Lower leg skin (tissue), 4 donors: ENCODE measurements at regions of chr12 and their contacts with region 1.

Region 1: DNA sequence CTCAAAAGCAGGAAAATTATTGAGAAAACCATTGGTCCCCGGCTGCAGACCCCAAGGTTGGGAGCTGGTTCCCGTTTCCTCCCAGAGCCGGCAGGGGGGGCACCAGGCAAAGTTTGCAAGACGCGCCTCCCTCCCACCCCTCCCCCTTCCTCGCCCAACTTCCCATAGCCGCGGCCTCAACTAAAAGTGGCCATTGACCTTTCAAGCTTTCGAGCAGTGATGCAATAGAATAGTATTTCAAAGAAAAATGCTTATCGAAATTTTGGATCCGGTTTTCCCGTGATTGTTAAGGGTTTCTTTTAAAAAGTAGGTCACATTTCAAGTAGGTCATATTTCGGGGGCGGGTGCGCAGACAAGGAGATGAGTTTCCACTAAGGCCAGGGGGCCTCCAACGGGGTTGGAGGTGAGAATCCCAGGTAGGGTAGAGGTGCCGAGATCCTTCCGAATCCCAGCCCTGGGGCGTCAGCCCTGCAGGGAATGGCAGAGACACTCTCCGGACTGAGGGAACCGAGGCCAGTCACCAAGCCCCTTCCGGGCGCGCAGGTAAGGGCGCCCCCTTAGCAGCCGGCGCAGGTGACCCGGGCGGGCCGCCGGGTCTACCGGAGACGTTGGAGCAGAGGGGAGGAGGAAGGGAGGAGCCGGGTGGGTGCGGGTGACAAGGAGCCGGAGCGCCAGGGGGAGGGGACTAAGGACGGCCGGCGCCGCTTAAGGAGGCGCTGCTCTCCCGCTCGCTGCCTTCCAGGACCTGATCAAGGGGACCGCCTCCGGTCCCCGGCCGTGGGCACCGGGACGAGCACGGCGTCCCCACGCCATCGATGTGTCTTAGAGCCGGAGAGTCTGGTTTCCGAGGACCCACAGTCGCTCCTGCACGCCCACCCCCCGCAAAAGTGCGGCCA is 2.6 kb upstream of the SOCS2 start:
- DNase-seq: peak; percentile 82 to 97
- H3K4me3 ChIP-seq: peak overlapping the region; percentile 66
- CTCF ChIP-seq: no peak
- POLR2A ChIP-seq: no peak

Region 2: GRCh38 chr12:93223440-93224426 is 346.2 kb before region 1 on chr12:
- intact Hi-C with region 1: no loop called
- DNase-seq: no peak
- H3K4me3 ChIP-seq: no peak overlapping the region
- CTCF ChIP-seq: no peak
- POLR2A ChIP-seq: no peak

Region 3: DNA sequence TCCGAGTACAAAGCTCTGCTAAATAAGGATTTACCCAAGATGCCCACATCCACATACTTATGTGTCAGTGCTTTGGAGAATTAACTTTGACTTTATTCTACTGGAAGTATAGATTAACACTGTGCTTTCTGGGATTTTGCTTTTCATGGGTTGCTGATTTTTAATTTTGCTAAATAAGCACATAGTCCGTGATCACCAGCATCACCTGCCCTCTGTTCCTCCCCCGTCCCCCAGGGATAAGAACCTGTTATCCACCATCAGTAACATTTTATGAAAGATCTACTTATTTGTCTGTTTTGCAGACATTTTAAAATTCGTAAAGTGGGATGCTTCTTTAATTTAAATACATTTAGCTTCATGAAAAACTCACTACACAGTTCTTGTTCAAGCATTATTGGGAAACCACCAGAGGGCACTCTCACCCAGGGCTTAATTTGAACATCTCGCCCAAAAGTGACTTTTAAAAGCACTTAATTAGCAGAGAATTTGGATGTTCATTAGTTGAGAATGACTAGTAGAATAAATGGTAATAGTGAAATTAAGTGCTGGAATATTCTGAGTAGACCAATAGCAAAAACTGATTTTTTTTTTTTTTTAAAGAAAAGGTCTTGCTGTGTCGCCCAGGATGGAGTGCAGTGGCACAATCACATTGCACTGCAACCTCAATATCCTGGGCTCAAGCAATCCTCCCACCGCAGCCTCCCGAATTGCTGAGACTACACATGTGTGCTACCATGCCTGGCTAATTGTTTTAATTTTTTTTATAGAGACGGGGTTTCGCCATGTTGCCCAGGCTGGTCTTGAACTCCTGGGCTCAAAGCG is 66.9 kb before region 1 on chr12:
- intact Hi-C with region 1: no loop called
- DNase-seq: peak in 1 of 2 donors; percentile 28
- H3K4me3 ChIP-seq: no peak overlapping the region
- CTCF ChIP-seq: peak in 1 of 3 donors; percentile 34
- POLR2A ChIP-seq: no peak

Region 4: DNA sequence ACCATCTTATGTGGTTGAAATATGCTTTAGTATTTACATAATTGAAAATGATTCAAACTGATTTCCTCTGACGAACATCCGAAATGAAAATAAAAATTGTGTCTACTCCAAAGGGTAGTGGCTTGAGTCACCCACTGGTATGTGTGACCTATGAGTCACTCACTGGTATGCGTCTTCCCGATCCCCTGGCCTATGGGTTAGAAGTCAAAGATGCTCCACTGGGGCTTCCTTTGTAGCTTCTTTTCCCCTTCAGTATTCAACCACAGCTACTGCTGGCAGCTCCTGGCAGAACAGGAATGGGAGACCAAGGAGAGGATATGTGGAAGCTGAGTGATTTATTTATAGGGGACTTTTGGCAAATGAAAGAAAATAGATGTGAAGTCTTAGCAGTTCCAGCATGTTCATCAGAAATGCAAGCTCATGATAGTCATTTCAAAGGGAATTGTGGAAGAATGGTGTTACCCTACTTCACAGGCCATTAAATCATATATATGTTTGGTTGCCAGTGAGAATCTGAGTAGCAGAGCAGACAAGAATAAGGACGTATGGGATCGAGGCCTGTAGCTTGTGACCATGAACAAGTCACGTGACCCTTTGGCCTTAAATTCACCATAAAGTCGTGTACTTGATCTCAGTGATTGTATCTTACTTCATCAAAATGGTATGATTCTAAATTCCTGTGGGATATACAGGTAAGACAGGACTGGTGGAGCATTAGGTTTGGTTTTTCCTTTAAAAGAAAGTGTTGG is 215.5 kb after region 1 on chr12:
- intact Hi-C with region 1: no loop called
- DNase-seq: peak in 1 of 2 donors; percentile 62
- H3K4me3 ChIP-seq: no peak overlapping the region
- CTCF ChIP-seq: no peak
- POLR2A ChIP-seq: no peak

Region 5: GRCh38 chr12:94101738-94102660 is 532.1 kb after region 1 on chr12:
- intact Hi-C with region 1: loop called (anchors 5 kb)
- DNase-seq: peak; percentile 89 to 97
- H3K4me3 ChIP-seq: peak overlapping the region; percentile 39
- CTCF ChIP-seq: peak in 1 of 3 donors; percentile 42
- POLR2A ChIP-seq: no peak